Naive thymus-derived CD4-positive, alpha-beta T cell (primary cell): ENCODE measurements at regions of chr1 and their contacts with region 1.

Region 1: GRCh38 chr1:158248118-158248517 is 6.1 kb upstream of the CD1A start:
- DNase-seq: peak in 8 of 9 donors; percentile 22 to 62 (median 54)
- ATAC-seq: peak; percentile 85
- H3K4me3 ChIP-seq: no peak overlapping the region
- H3K4me3 Mint-ChIP-seq: peak overlapping the region in 9 of 10 donors; percentile 15 to 71 (median 59)
- H3K27ac ChIP-seq: no peak overlapping the region
- H3K27ac Mint-ChIP-seq: peak overlapping the region in 4 of 9 donors; percentile 2 to 81 (median 28)
- H3K4me1 ChIP-seq: peaks cover 18 to 20% of the 10 kb centered on the region in 2 donors
- H3K4me1 Mint-ChIP-seq: peaks cover 18 to 31% (median 24%) of the 10 kb centered on the region in 7 donors
- H3K27me3 ChIP-seq: peaks cover 0 to 3% of the 10 kb centered on the region in 2 donors
- H3K27me3 Mint-ChIP-seq: peaks cover 42 to 76% (median 58%) of the 10 kb centered on the region in 5 donors

Region 2: GRCh38 chr1:158212320-158212719 is 35.8 kb before region 1 on chr1:
- CTCF ChIA-PET with region 1: no interaction called
- POLR2A ChIA-PET with region 1: no interaction called
- intact Hi-C with region 1: no loop called
- DNase-seq: no peak
- ATAC-seq: no peak
- H3K4me3 ChIP-seq: no peak overlapping the region
- H3K4me3 Mint-ChIP-seq: no peak overlapping the region
- H3K27ac ChIP-seq: no peak overlapping the region
- H3K27ac Mint-ChIP-seq: no peak overlapping the region
- H3K4me1 ChIP-seq: no peaks in the 10 kb centered on the region
- H3K4me1 Mint-ChIP-seq: no peaks in the 10 kb centered on the region
- H3K27me3 ChIP-seq: no peaks in the 10 kb centered on the region
- H3K27me3 Mint-ChIP-seq: peaks cover 27 to 58% (median 48%) of the 10 kb centered on the region in 5 donors

Region 3: DNA sequence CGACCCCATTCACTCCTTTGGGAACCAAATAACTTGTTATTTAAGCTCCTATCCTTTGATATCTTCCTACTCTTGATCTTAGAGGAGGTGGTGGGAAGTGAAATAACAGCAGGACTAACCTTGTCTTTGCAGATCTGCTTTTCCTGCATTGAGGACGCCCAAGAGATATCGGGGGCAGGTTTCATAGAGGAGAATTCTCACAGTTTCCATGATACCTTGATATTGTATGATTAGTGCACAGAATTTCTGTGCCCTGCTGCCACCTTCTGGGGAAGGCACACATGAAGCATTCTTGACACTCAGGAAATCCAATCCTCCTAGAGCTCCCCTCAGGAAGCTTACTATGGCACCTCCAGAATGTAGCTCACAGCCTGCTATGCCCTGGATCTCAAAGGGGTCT is 81.6 kb after region 1 on chr1:
- CTCF ChIA-PET with region 1: no interaction called
- POLR2A ChIA-PET with region 1: no interaction called
- intact Hi-C with region 1: loop called (anchors 5 kb)
- DNase-seq: peak in 1 of 9 donors; percentile 15
- ATAC-seq: no peak
- H3K4me3 ChIP-seq: no peak overlapping the region
- H3K4me3 Mint-ChIP-seq: no peak overlapping the region
- H3K27ac ChIP-seq: no peak overlapping the region
- H3K27ac Mint-ChIP-seq: no peak overlapping the region
- H3K4me1 ChIP-seq: no peaks in the 10 kb centered on the region
- H3K4me1 Mint-ChIP-seq: peaks cover 0 to 16% (median 10%) of the 10 kb centered on the region in 7 donors
- H3K27me3 ChIP-seq: no peaks in the 10 kb centered on the region
- H3K27me3 Mint-ChIP-seq: peaks cover 0 to 23% (median 14%) of the 10 kb centered on the region in 5 donors

Region 4: GRCh38 chr1:158496374-158496773 is 248.3 kb after region 1 on chr1:
- CTCF ChIA-PET with region 1: no interaction called
- POLR2A ChIA-PET with region 1: no interaction called
- intact Hi-C with region 1: loop called in 1 of 2 experiments (anchors 5 kb)
- DNase-seq: no peak
- ATAC-seq: no peak
- H3K4me3 ChIP-seq: no peak overlapping the region
- H3K4me3 Mint-ChIP-seq: no peak overlapping the region
- H3K27ac ChIP-seq: no peak overlapping the region
- H3K27ac Mint-ChIP-seq: no peak overlapping the region
- H3K4me1 ChIP-seq: no peaks in the 10 kb centered on the region
- H3K4me1 Mint-ChIP-seq: no peaks in the 10 kb centered on the region
- H3K27me3 ChIP-seq: no peaks in the 10 kb centered on the region
- H3K27me3 Mint-ChIP-seq: peaks cover 25 to 37% (median 27%) of the 10 kb centered on the region in 5 donors

Region 5: GRCh38 chr1:158527190-158527815 is 279.2 kb after region 1 on chr1:
- CTCF ChIA-PET with region 1: no interaction called
- POLR2A ChIA-PET with region 1: no interaction called
- intact Hi-C with region 1: loop called in 1 of 2 experiments (anchors 2 kb)
- DNase-seq: peak in 2 of 9 donors; percentile 9 to 14
- ATAC-seq: peak; percentile 59
- H3K4me3 ChIP-seq: no peak overlapping the region
- H3K4me3 Mint-ChIP-seq: no peak overlapping the region
- H3K27ac ChIP-seq: no peak overlapping the region
- H3K27ac Mint-ChIP-seq: no peak overlapping the region
- H3K4me1 ChIP-seq: no peaks in the 10 kb centered on the region
- H3K4me1 Mint-ChIP-seq: no peaks in the 10 kb centered on the region
- H3K27me3 ChIP-seq: no peaks in the 10 kb centered on the region
- H3K27me3 Mint-ChIP-seq: peaks cover 0 to 57% (median 31%) of the 10 kb centered on the region in 5 donors